ENCODE measurements at regions of chr16 and their contacts with region 1.

Region 1: DNA sequence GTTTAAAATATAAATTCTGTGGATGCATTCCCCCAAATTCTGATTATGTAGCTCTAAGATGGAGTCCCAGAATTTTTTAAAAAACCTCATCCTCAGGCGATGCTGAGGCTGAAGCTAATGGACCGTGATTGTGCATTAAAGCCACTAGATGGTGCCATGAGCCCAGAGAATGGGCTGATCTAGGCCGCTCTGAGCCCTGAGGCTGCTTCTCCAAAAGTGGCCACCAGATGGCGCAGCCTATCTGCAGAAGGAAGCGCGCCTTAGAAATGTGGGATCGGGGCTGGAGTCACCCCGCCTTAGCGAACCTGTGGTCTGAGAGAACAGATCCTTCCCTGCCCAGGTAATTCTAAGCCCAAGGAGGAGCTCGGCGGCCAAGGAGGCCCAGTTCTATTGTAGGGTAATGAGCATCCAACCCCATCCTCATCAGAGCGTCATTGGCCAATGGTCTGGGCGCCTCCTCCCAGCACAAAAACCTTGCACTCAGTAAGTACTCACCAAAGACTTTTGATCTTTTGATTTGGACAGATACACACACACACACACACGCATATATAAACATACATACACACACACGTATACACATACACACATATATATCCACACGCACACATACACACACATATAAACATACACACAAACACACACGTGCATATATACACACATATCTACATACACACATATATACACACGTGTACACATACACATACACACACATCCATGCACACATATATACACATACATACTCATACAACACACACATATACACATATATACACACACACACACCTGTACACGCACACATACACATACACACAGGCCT is 13.7 kb upstream of the MMP2 start:
- DNase-seq: peak; percentile 83 to 86 (median 85)
- ATAC-seq: peak; percentile 97 to 100 (median 99)
- H3K4me3 ChIP-seq: no peak overlapping the region
- H3K27ac ChIP-seq: no peak overlapping the region
- H3K4me1 ChIP-seq: no peaks in the 10 kb centered on the region
- H3K27me3 ChIP-seq: no peaks in the 10 kb centered on the region
- CTCF ChIP-seq: peak; percentile 99 to 100 (median 100)
- POLR2A ChIP-seq: no peak

Region 2: DNA sequence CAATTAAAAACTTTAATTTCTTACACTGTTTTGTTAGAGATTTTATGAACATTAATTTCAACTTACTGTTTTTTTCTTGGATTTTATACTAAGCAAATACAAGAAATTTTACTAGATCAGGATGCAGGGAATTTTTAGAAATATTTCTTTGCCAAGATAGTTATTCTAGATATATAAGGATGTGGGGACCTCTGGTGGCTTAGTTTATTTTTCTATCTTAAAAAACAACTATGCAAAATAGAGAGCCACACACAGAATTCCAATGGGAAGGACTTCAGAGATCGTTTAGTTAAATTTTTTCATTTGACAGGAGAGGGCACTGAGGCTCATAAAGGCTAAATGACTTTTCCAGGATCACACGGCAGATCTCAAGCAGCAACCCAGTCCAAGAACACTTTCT is 78.2 kb after region 1 on chr16:
- intact Hi-C with region 1: loop called (anchors 5 to 10 kb)
- DNase-seq: no peak
- ATAC-seq: peak; percentile 66 to 74 (median 72)
- H3K4me3 ChIP-seq: no peak overlapping the region
- H3K27ac ChIP-seq: no peak overlapping the region
- H3K4me1 ChIP-seq: no peaks in the 10 kb centered on the region
- H3K27me3 ChIP-seq: no peaks in the 10 kb centered on the region
- CTCF ChIP-seq: peak; percentile 28 to 50 (median 47)
- POLR2A ChIP-seq: no peak

Region 3: DNA sequence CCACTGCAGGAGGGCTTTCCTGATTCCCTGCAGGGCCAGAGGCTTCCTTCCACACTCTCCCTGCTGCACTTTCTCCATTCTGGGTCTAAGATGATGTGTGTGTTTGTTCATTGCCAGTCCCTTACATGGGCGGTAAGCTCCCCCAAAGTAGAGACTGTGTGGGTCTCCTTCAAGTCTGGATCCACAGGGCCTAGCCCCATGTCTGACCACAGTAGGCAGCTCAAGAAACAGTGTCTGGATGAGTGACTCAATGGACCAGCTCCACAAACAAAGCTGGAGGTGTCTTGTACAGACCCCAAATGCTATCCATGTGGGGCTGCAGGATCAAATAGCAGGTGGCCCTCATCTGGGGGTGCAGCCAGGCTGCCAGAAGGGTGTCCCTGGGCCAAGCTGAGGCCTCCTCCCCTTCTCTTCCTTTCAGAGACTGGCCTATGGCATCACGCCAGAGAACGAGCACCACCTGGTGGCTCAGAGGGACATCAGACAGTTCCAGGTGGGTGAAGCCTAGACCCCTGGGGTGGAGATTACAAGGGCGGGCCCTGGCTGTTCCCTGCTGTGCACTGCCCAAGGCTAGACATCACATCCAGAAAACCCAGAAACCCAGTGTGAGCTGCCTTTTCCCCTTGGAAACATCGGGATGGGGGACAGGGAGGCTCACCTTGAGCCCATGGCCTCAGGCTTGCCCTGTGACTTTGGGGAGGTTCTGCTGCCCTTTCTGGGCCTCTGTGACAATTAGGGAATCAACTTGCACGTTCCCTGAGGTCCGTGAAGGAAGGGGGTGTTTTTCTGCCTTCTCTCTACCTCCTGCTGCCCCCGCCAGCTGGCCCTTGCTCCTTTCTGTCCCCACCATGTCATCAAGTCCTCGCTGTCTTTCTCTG is 236.4 kb after region 1 on chr16:
- intact Hi-C with region 1: loop called (anchors 5 kb)
- DNase-seq: peak; percentile 64 to 70 (median 67)
- ATAC-seq: peak; percentile 62 to 78 (median 74)
- H3K4me3 ChIP-seq: no peak overlapping the region
- H3K27ac ChIP-seq: no peak overlapping the region
- H3K4me1 ChIP-seq: no peaks in the 10 kb centered on the region
- H3K27me3 ChIP-seq: no peaks in the 10 kb centered on the region
- CTCF ChIP-seq: peak; percentile 61 to 72 (median 68)
- POLR2A ChIP-seq: no peak

Region 4: DNA sequence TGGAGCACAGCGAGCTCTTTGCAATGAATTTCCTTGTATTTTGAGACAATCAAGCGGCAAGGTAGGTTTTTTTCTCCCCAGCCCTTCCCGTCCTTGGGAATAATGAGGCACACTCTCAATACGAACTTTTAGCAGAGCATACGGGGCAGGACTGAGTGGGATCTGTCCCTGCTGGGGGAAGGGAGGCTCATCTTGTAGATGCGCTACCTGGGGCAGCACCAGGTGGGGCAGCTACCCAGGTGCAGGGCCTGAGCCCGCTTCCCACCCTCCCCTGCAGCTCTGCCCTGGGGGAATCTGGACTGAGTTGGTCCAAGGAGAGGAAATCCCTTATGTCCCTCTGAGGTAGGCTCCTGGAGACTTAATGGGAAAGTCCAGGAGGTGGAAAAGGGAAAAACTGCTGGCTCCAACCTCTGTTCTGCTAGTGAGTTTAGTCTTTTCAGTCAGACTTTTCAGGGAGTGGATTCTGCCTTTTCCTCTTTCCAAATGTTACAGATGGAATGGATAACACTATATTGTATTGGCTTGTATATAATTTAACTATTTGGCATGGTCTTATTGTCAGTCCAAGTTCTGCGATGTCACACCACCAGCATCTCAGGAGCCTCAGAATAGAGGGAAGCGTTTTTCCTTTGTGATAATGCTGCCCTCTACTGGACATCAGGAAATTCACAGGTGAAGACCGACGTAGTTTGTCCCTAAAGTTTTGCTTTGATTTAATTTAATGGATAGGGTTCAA is 377.2 kb after region 1 on chr16:
- intact Hi-C with region 1: loop called in 1 of 2 experiments (anchors 10 kb)
- DNase-seq: no peak
- ATAC-seq: peak; percentile 80 to 89 (median 86)
- H3K4me3 ChIP-seq: no peak overlapping the region
- H3K27ac ChIP-seq: no peak overlapping the region
- H3K4me1 ChIP-seq: peaks cover 0 to 17% (median 4%) of the 10 kb centered on the region in 4 donors
- H3K27me3 ChIP-seq: no peaks in the 10 kb centered on the region
- CTCF ChIP-seq: peak; percentile 67 to 85 (median 72)
- POLR2A ChIP-seq: no peak

Measured in right lobe of liver (tissue), 6 donors.